Activated B cell treated with CpG ODN at 0.5 μM for 24 hours (primary cell): ENCODE measurements at regions of chr3 and their contacts with region 1.

Region 1: DNA sequence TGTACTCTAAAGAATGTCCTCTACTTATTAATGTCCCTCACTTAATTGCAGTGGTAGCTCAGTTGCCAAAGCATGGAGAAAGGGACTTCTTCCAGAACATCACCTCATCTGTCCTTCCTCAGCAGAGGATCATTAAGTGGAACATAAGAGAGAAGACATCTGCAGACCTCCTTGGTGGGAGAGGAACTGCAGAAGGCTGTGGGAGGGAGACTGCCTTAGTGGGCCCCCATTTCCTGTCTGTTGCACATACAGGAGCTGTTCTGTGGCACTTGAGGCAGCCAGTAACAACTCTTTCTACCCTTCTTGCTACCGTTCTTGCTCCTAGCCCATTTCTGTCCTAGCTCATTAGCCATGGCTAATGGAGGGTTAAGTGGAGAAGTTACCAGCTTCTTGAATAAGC is 33.6 kb downstream of the HPS3 start:
- DNase-seq: no peak
- ATAC-seq: no peak
- H3K4me3 Mint-ChIP-seq: no peak overlapping the region
- H3K27ac Mint-ChIP-seq: no peak overlapping the region
- H3K4me1 Mint-ChIP-seq: peaks cover 7% of the 10 kb centered on the region
- H3K27me3 Mint-ChIP-seq: no peaks in the 10 kb centered on the region
- CTCF ChIP-seq: no peak

Region 2: GRCh38 chr3:149095487-149095886 is 67.6 kb before region 1 on chr3:
- CTCF ChIA-PET with region 1: no interaction called
- POLR2A ChIA-PET with region 1: no interaction called
- intact Hi-C with region 1: no loop called
- DNase-seq: no peak
- ATAC-seq: peak; percentile 54
- H3K4me3 Mint-ChIP-seq: peak overlapping the region; percentile 19
- H3K27ac Mint-ChIP-seq: peak overlapping the region; percentile 72
- H3K4me1 Mint-ChIP-seq: peaks cover 16% of the 10 kb centered on the region
- H3K27me3 Mint-ChIP-seq: no peaks in the 10 kb centered on the region
- CTCF ChIP-seq: no peak

Region 3: GRCh38 chr3:149152420-149152819 is 10.6 kb before region 1 on chr3:
- CTCF ChIA-PET with region 1: no interaction called
- POLR2A ChIA-PET with region 1: interaction called, 6 read pairs
- intact Hi-C with region 1: loop called (anchors 1 kb)
- DNase-seq: no peak
- ATAC-seq: peak; percentile 58
- H3K4me3 Mint-ChIP-seq: no peak overlapping the region
- H3K27ac Mint-ChIP-seq: peak overlapping the region; percentile 50
- H3K4me1 Mint-ChIP-seq: peaks cover 25% of the 10 kb centered on the region
- H3K27me3 Mint-ChIP-seq: no peaks in the 10 kb centered on the region
- CTCF ChIP-seq: no peak

Region 4: DNA sequence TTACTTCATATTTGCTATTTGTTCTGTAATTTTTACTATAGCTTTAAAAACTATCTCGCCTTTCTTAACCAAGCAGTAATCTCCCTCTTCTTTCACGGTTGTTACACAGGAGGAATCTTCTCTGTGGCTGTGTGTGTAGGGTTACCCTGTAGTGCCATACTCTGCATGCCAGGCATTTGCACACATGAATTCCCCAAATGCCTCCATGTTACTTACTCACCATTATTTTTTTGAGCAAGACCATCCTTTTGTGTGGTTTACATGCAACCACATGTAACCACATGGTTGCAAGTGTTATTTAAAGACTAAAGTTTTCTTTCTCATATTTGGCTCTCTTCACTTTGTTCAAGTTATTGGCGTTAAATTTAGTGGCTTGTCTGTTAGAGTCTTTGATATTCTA is 11.8 kb after region 1 on chr3:
- CTCF ChIA-PET with region 1: no interaction called
- POLR2A ChIA-PET with region 1: no interaction called
- intact Hi-C with region 1: loop called (anchors 2 kb)
- DNase-seq: no peak
- ATAC-seq: no peak
- H3K4me3 Mint-ChIP-seq: no peak overlapping the region
- H3K27ac Mint-ChIP-seq: no peak overlapping the region
- H3K4me1 Mint-ChIP-seq: peaks cover 2% of the 10 kb centered on the region
- H3K27me3 Mint-ChIP-seq: no peaks in the 10 kb centered on the region
- CTCF ChIP-seq: no peak